Activated CD8-positive, alpha-beta T cell treated with anti-CD3 and anti-CD28 coated beads, Interleukin-2, amount 10 ng/mL, durations not matched to agents 7 days and 5 days (primary cell): ENCODE measurements at regions of chr17 and their contacts with region 1.

Region 1: DNA sequence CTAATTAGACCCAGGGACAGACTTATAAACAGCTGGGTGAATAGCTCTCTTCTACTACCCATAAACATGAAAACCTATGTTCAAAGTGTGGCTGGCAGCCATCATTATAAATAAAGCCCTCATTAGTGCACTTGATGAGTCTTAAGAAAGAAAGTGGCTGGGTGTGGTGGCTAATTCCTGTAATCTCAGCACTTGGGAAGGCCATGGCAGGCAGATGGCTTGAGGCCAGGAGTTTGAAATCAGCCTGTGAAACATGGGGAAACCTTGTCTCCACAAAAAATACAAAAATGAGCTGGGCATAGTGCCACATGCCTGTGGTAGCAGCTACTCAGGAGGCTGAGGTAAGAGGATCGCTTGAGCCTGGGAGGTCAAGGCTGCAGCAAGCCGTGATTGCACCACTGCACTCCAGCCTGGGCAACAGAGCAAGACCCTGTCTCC is 28.3 kb upstream of the APPBP2 start:
- DNase-seq: no peak
- ATAC-seq: no peak
- H3K4me3 Mint-ChIP-seq: no peak overlapping the region
- H3K27ac Mint-ChIP-seq: no peak overlapping the region
- H3K4me1 Mint-ChIP-seq: no peaks in the 10 kb centered on the region
- H3K27me3 Mint-ChIP-seq: no peaks in the 10 kb centered on the region

Region 2: DNA sequence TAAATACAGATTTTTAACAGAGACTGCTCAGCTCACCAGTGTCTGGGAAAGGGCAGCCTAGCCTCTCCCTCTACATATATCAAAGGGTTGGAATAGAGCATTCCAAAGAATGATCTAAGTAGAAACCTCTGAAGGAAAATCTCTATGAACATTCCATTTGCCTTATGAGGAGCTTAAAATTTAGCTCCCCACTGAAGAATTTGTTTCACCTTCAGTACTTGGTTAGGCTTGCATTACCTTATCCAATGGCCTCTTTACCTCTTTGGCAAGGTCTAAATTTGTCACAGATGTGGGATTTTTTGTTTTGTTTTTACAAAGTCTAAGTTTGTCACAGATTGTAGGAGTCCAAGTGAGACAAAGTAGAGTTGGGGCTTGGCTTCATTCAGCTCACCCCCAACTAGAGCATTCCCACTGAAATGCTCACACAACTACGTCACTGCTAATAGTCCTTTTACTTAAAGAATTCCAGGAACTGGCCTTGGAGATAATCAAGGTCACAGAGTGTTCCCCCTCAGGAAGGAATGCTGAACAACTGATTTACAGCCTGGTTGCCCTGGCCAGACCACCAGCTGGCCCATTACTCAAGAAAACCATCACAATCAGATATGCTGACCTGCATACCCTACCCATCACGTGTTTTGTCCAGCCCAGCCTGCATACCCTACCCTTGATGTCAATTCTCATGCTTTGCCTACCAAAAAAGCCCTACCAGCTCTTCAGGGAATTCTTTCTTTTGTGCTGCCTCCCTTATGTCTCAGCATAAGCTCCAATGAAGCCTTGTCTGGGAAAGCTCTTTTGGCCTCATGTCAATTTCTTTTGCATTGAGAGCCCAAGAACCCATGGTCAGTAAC is 19.1 kb after region 1 on chr17:
- CTCF ChIA-PET with region 1: interaction called, 16 read pairs
- POLR2A ChIA-PET with region 1: no interaction called
- DNase-seq: no peak
- ATAC-seq: no peak
- H3K4me3 Mint-ChIP-seq: no peak overlapping the region
- H3K27ac Mint-ChIP-seq: no peak overlapping the region
- H3K4me1 Mint-ChIP-seq: peaks cover 9% of the 10 kb centered on the region
- H3K27me3 Mint-ChIP-seq: peaks cover 22% of the 10 kb centered on the region